WTC11 (cell line): ENCODE measurements at regions of chr2 and their contacts with region 1.

Region 1: GRCh38 chr2:85288244-85288725 is 39.5 kb downstream of the TGOLN2 start:
- DNase-seq: no peak
- ATAC-seq: peak; percentile 39
- H3K4me3 Mint-ChIP-seq: no peak overlapping the region
- H3K27ac Mint-ChIP-seq: peak overlapping the region; percentile 74; the same call in 1 of the 2 replicates
- H3K4me1 Mint-ChIP-seq: peaks cover 39% of the 10 kb centered on the region
- H3K27me3 Mint-ChIP-seq: no peaks in the 10 kb centered on the region
- CTCF ChIP-seq: no peak

Region 2: GRCh38 chr2:85083092-85083491 is 205.2 kb before region 1 on chr2:
- CTCF ChIA-PET with region 1: no interaction called
- POLR2A ChIA-PET with region 1: no interaction called
- DNase-seq: no peak
- ATAC-seq: no peak
- H3K4me3 Mint-ChIP-seq: no peak overlapping the region
- H3K27ac Mint-ChIP-seq: no peak overlapping the region
- H3K4me1 Mint-ChIP-seq: peaks cover 4% of the 10 kb centered on the region
- H3K27me3 Mint-ChIP-seq: peaks cover 8% of the 10 kb centered on the region; the same call in 1 of the 2 replicates
- CTCF ChIP-seq: no peak

Region 3: GRCh38 chr2:85132834-85133637 is 155.2 kb before region 1 on chr2 and contains the start of gene TCF7L1:
- CTCF ChIA-PET with region 1: interaction called, 26 read pairs
- POLR2A ChIA-PET with region 1: no interaction called
- DNase-seq: peak; percentile 93
- ATAC-seq: peak; percentile 78
- H3K4me3 Mint-ChIP-seq: peak within 1 kb of the TSS; percentile 83
- H3K27ac Mint-ChIP-seq: peak within 1 kb of the TSS; percentile 65
- H3K4me1 Mint-ChIP-seq: peaks cover 36% of the 10 kb centered on the region
- H3K27me3 Mint-ChIP-seq: peaks cover 3% of the 10 kb centered on the region
- CTCF ChIP-seq: peak; percentile 73
- total RNA-seq, gene TCF7L1: 104 to 108 TPM (median 106 TPM) in 3 replicates

Region 4: DNA sequence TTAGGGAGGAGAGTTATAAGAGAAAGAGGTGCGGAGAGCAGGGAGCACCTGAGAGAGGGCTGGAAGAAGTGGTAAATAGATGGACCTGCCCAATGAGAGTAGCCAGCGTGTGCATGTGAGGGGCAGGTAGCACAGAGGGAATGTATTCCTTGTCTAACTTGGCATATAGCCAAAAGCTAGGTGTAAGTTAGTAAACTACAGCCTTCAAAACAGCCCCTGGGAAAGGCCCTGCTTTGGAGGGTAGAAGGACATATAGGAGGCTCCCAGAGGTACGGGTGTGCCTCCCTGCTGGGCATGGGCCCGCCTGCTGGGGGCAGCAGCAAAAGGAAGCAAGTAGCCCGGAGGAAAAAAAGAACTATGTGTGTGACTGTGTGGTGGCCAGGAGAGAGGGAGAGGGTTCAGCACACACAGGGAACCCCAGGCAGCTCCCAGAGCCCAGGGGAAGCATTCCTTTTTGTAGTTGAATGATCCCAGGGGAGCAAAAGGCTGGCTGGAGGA is 107.1 kb before region 1 on chr2:
- CTCF ChIA-PET with region 1: interaction called, 28 read pairs
- POLR2A ChIA-PET with region 1: no interaction called
- DNase-seq: no peak
- ATAC-seq: no peak; the same call in 1 of the 2 replicates
- H3K4me3 Mint-ChIP-seq: no peak overlapping the region; the same call in 1 of the 2 replicates
- H3K27ac Mint-ChIP-seq: peak overlapping the region; percentile 84
- H3K4me1 Mint-ChIP-seq: peaks cover 92% of the 10 kb centered on the region
- H3K27me3 Mint-ChIP-seq: no peaks in the 10 kb centered on the region
- CTCF ChIP-seq: no peak

Region 5: GRCh38 chr2:85255813-85256594 is 32.3 kb before region 1 on chr2:
- CTCF ChIA-PET with region 1: interaction called, 25 read pairs
- POLR2A ChIA-PET with region 1: no interaction called
- DNase-seq: peak; percentile 85
- ATAC-seq: peak; percentile 61
- H3K4me3 Mint-ChIP-seq: peak overlapping the region; percentile 68
- H3K27ac Mint-ChIP-seq: peak overlapping the region; percentile 100
- H3K4me1 Mint-ChIP-seq: peaks cover 94% of the 10 kb centered on the region
- H3K27me3 Mint-ChIP-seq: no peaks in the 10 kb centered on the region
- CTCF ChIP-seq: no peak

Region 6: DNA sequence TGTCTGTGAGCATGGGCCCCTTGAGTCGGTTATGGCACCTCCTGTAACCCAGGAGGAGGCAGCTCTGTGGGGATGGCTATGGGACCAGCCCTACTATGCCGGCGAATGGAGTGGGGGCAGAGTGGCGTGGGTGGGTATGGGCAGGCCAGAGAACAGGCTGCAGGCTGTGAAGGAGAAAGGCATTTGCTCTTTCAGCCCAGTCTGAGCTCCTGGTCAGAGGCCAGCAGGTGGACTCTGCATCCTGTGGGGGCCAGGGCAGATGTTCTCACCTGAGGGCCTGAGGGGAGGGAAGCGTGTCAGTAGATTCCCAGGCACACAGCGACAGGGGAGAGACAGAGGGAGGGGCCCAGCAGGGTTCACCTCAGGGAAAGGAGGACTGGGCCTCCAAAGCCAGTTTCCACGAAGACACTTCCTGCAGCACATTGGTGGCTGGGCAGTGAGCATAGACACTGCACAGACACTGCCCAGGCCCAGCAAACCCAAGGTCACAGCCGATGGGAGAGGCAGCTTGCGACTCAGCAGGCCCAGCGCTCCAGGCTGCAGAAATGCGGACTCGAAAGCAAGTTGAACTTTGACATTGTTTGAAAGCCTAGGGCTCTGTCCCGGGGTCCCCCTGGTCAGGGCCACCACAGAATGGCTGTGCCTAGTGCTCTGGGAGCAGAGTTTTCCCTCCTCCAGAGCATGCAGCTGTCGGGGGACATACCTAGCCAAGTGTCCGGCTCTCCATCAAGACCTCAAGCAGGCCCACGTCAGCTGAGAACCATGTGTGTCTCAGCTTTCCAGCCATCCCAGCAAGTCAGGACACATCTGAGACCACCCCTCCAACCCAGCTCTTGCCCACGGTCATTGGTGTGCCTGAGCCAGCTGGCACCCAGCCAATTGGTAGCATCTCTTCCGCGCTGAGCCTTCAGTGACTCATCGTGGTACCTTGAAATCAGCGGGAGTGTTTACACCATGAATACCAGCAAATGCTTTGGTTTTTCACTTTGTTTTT is 14.2 kb before region 1 on chr2:
- CTCF ChIA-PET with region 1: interaction called, 20 read pairs
- POLR2A ChIA-PET with region 1: interaction called, 3 read pairs
- DNase-seq: no peak
- ATAC-seq: no peak; the same call in 1 of the 2 replicates
- H3K4me3 Mint-ChIP-seq: no peak overlapping the region
- H3K27ac Mint-ChIP-seq: peak overlapping the region; percentile 64; the same call in 1 of the 2 replicates
- H3K4me1 Mint-ChIP-seq: peaks cover 84% of the 10 kb centered on the region
- H3K27me3 Mint-ChIP-seq: no peaks in the 10 kb centered on the region
- CTCF ChIP-seq: no peak

Region 7: DNA sequence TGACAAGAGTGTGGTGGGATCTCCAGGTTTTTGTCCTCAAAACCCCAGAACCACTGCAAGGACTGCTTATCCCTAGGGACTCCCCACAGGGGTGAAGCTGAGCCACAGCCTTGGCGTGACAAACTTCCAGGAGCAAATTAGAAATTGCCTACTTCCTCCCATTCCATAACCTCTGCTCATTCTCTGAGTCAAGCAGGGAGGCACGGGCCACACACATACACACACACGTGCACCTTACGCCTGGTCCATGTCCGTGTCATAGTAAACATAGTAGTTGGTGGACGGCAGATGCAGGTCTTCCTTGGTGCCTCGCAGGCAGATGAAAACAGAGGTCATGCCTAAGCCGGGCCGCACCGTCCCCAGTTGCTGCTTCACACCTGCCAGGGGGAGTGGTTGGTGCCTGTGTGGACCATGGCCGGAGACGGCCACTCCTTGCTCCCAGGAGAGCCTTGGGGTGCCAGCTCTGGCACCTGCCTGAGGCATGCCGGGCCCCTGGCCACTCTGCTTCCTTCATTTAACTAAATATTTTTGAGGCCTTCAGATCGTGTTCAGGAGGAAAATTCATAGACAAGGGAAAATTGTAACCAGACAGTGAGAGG is 56.2 kb after region 1 on chr2:
- CTCF ChIA-PET with region 1: no interaction called
- POLR2A ChIA-PET with region 1: no interaction called
- DNase-seq: no peak
- ATAC-seq: no peak
- H3K4me3 Mint-ChIP-seq: no peak overlapping the region
- H3K27ac Mint-ChIP-seq: no peak overlapping the region
- H3K4me1 Mint-ChIP-seq: peaks cover 11% of the 10 kb centered on the region
- H3K27me3 Mint-ChIP-seq: no peaks in the 10 kb centered on the region
- CTCF ChIP-seq: no peak

Region 8: DNA sequence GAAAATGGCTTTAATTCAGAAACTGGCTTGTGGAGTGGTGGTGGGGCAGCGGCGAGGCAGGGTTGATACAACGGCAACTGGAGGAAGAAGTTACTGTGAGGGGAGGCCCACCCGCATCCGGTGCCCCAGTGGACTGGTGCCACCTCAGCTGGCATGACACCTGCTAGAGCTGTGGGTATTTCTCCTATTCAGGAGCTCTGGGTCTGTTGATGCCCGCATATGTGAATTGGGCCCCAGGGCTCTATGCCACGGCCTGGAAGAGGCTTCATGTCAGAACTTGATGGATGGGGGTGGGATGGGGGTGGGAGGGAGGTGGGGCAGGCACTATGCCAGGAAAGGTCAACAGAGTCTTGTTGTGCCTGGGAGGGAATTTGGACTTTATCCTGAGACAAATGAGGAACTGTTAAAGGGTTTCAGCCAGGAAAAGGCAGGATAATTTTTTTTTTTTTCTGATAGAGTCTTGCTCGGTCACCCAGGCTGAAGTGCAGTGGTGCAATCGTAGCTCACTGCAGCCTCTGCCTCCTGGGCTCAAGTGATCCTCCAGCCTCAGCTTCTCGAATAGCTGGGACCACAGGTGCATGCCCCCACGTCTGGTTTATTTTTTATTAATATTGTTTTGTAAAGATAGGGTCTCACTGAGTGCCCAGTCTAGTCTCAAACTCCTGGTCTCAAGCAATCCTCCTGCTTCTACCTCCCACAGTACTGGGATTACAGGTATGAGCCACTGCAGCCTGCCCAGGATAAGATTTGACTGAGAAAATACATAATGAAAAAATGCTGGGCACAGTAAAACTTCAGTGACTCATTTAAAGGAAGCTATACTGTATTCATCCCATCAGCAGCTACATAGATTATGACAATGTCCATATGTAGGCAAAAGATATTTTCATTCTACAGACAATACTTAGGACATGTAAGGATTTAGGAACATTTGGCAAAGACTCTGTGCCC is 182.8 kb after region 1 on chr2:
- CTCF ChIA-PET with region 1: no interaction called
- POLR2A ChIA-PET with region 1: no interaction called
- DNase-seq: no peak
- ATAC-seq: no peak
- H3K4me3 Mint-ChIP-seq: no peak overlapping the region
- H3K27ac Mint-ChIP-seq: no peak overlapping the region
- H3K4me1 Mint-ChIP-seq: peaks cover 22% of the 10 kb centered on the region
- H3K27me3 Mint-ChIP-seq: no peaks in the 10 kb centered on the region; the same call in 1 of the 2 replicates
- CTCF ChIP-seq: no peak

Region 9: DNA sequence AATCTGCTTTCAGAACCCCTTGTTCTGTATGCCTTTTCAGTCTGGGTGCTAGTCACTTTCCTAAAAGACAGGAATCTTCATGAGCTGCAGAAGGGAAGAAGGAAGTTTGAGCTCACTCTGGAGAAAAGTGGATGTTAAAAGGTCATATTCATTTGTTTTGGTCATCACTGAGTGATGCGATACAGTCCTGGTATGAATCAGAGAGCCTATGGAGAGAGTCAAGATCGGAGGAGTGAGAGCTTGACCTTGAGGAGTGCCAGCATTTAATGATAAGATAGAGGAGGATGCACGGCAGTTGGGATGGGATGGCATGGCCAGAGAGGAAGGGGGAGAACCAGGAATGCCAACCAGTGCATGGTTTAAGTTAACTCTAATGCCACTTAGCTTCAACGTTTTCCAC is 347.4 kb after region 1 on chr2:
- CTCF ChIA-PET with region 1: no interaction called
- POLR2A ChIA-PET with region 1: no interaction called
- DNase-seq: no peak
- ATAC-seq: no peak
- H3K4me3 Mint-ChIP-seq: no peak overlapping the region
- H3K27ac Mint-ChIP-seq: no peak overlapping the region
- H3K4me1 Mint-ChIP-seq: no peaks in the 10 kb centered on the region
- H3K27me3 Mint-ChIP-seq: no peaks in the 10 kb centered on the region
- CTCF ChIP-seq: no peak